ENCODE measurements at regions of chr12 and their contacts with region 1.

Region 1: GRCh38 chr12:80821513-80822000 is 104.8 kb downstream of the MYF5 start:
- DNase-seq: no peak
- ATAC-seq: no peak
- H3K4me3 Mint-ChIP-seq: no peak overlapping the region
- H3K27ac Mint-ChIP-seq: no peak overlapping the region
- H3K4me1 Mint-ChIP-seq: no peaks in the 10 kb centered on the region
- H3K27me3 Mint-ChIP-seq: no peaks in the 10 kb centered on the region

Region 2: DNA sequence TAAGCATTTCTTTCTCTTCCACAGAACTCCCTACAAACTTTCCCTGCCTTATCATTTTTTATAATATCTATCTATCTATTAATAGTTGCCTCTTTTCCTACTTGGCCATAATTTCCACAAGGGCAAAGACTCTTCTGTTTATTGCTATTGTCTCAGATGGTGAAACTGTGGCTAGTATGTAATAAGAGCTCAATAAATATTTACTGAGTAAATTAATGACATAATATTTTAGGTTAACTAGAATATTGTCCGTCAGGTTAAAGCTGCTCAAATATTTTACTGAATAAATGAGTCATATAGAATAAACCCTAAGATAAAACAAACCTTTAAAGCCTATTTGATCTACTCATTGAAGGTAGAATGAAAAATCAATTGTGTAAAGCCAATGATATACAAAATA is 697.1 kb after region 1 on chr12:
- CTCF ChIA-PET with region 1: no interaction called
- POLR2A ChIA-PET with region 1: interaction called, 12 read pairs
- intact Hi-C with region 1: no loop called
- DNase-seq: no peak
- ATAC-seq: no peak
- H3K4me3 Mint-ChIP-seq: no peak overlapping the region
- H3K27ac Mint-ChIP-seq: no peak overlapping the region
- H3K4me1 Mint-ChIP-seq: peaks cover 2% of the 10 kb centered on the region
- H3K27me3 Mint-ChIP-seq: no peaks in the 10 kb centered on the region